ENCODE measurements at regions of chr2 and their contacts with region 1.

Region 1: GRCh38 chr2:105789745-105790460 is 45.2 kb downstream of the NCK2 start:
- DNase-seq: peak; percentile 56 to 92 (median 61)
- H3K4me3 ChIP-seq: peak overlapping the region in 1 of 2 donors; percentile 25
- H3K4me3 Mint-ChIP-seq: peak overlapping the region; percentile 78 to 92 (median 84)
- H3K27ac ChIP-seq: peak overlapping the region; percentile 79
- H3K27ac Mint-ChIP-seq: peak overlapping the region; percentile 92 to 98 (median 96)
- H3K4me1 ChIP-seq: peaks cover 98% of the 10 kb centered on the region
- H3K4me1 Mint-ChIP-seq: peaks cover 80 to 98% (median 87%) of the 10 kb centered on the region in 4 donors
- H3K27me3 ChIP-seq: no peaks in the 10 kb centered on the region
- H3K27me3 Mint-ChIP-seq: no peaks in the 10 kb centered on the region

Region 2: DNA sequence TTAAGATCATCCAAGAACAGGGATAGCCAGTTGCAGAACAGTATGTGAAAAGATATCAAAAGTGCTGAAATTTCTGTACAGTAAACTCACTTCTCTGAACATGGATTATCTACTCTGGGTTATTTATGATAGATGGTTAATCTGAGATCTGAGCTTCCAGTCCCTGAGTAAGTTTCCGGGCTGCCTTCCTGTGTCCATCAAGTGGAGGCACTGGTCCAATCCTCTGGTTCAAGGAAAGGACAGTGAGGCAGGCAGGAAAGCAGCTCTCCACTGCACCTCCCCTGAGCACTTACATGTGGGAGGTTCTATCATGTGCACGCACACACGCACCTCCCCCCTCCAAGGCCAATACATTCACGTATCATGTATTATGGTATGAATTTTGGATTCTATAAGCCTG is 515.9 kb before region 1 on chr2:
- CTCF ChIA-PET with region 1: no interaction called
- POLR2A ChIA-PET with region 1: no interaction called
- intact Hi-C with region 1: no loop called
- DNase-seq: no peak
- H3K4me3 ChIP-seq: no peak overlapping the region
- H3K4me3 Mint-ChIP-seq: no peak overlapping the region
- H3K27ac ChIP-seq: no peak overlapping the region
- H3K27ac Mint-ChIP-seq: peak overlapping the region in 1 of 7 donors; percentile 50
- H3K4me1 ChIP-seq: no peaks in the 10 kb centered on the region
- H3K4me1 Mint-ChIP-seq: no peaks in the 10 kb centered on the region
- H3K27me3 ChIP-seq: no peaks in the 10 kb centered on the region
- H3K27me3 Mint-ChIP-seq: no peaks in the 10 kb centered on the region

Region 3: DNA sequence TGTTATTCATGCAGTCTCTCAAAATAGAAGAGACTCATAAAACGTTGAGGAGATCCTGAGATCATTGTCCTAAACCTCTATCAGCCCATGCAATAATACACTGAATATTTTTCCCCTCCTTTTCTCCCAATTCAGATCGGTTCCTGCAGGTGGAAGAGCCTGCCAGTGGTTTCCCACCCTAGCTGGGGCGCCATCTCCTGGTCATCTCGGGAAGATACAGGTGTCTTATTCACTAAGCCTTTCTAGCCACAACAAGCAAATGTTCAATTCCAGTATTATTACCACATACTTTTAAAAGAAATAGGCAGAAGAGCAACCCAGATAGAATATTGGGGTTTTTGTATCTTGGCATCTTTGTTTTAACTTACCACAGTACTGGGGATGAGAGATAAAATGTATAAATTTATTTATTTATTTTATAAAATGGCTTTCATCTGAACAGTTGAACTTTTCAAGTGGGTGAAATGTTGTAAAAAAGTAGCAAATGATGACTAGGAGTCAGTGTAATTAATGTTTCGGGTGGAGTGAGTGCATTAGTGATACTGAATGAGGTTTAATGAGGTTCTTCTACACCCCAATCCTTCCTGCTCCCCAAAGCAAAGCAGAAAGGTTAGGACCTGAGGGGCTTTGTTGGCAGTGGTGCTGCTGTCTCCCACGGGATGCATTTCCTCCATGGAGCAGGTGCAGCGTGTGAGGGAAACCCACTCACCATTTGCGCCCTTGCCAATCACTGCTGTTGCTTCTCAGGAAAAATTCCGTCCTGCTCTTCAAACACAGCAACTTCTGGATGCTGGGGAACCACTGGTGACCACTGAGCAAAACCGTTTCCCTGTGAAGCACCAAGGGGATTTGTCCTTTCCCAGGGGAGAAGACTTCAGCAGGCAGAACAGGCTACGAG is 243.9 kb before region 1 on chr2:
- CTCF ChIA-PET with region 1: interaction called, 11 read pairs
- POLR2A ChIA-PET with region 1: no interaction called
- intact Hi-C with region 1: no loop called
- DNase-seq: peak; percentile 54 to 59 (median 55)
- H3K4me3 ChIP-seq: no peak overlapping the region
- H3K4me3 Mint-ChIP-seq: peak overlapping the region; percentile 42 to 66 (median 55)
- H3K27ac ChIP-seq: peak overlapping the region; percentile 15
- H3K27ac Mint-ChIP-seq: peak overlapping the region in 3 of 7 donors; percentile 3 to 18 (median 11)
- H3K4me1 ChIP-seq: peaks cover 12% of the 10 kb centered on the region
- H3K4me1 Mint-ChIP-seq: peaks cover 9 to 15% (median 13%) of the 10 kb centered on the region in 4 donors
- H3K27me3 ChIP-seq: no peaks in the 10 kb centered on the region
- H3K27me3 Mint-ChIP-seq: peaks cover 0 to 3% of the 10 kb centered on the region in 2 donors

Region 4: DNA sequence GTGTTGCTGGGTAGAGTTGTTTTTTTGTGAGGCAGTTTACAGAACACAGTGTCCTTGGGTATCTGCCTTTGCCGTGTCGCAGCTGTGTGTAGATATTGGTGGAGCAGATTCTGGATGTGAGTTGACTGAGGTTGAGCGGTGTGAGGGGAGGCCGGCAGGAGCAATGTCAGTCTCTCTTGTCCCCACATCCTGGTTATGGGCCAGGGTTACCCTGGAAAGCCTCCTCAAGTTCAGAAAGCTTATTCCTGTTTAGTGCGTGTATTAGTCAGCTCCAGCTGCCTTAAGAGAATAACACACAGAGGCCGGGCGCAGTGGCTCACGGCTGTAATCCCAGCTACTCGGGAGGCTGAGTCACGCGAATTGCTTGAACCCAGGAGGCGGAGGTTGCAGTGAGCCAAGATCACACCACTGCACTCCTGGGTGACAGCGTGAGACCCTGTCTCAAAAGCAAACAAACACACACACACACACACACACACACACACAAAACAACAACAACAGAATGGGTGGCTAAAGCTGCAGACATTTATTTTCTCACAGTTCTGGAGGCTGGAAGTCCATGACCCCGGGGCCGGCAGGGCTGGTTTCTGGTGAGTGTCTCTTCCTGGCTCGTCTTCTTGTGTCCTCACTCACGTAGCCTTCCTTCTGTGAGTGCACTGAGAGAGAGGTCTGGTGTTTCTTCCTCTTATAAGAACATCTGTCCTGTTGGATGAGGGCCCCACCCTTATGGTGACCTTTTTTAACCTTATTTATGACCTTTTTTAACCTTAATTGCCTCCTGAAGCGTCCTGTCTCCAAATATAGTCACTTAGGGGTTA is 40.1 kb before region 1 on chr2:
- CTCF ChIA-PET with region 1: interaction called, 96 read pairs
- POLR2A ChIA-PET with region 1: interaction called, 33 read pairs
- intact Hi-C with region 1: no loop called
- DNase-seq: peak in 3 of 5 donors; percentile 32 to 63 (median 37)
- H3K4me3 ChIP-seq: peak overlapping the region; percentile 21 to 48
- H3K4me3 Mint-ChIP-seq: peak overlapping the region; percentile 88 to 99 (median 92)
- H3K27ac ChIP-seq: peak overlapping the region; percentile 78
- H3K27ac Mint-ChIP-seq: peak overlapping the region; percentile 92 to 99 (median 97)
- H3K4me1 ChIP-seq: peaks cover 81% of the 10 kb centered on the region
- H3K4me1 Mint-ChIP-seq: peaks cover 60 to 93% (median 75%) of the 10 kb centered on the region in 4 donors
- H3K27me3 ChIP-seq: no peaks in the 10 kb centered on the region
- H3K27me3 Mint-ChIP-seq: no peaks in the 10 kb centered on the region

Region 5: GRCh38 chr2:105775809-105776559 is 13.9 kb before region 1 on chr2:
- CTCF ChIA-PET with region 1: interaction called, 83 read pairs
- POLR2A ChIA-PET with region 1: interaction called, 17 read pairs
- intact Hi-C with region 1: loop called (anchors 2 kb)
- DNase-seq: peak in 3 of 5 donors; percentile 48 to 66 (median 48)
- H3K4me3 ChIP-seq: peak overlapping the region; percentile 3 to 55
- H3K4me3 Mint-ChIP-seq: peak overlapping the region; percentile 73 to 90 (median 82)
- H3K27ac ChIP-seq: peak overlapping the region; percentile 71
- H3K27ac Mint-ChIP-seq: peak overlapping the region; percentile 91 to 98 (median 97)
- H3K4me1 ChIP-seq: peaks cover 100% of the 10 kb centered on the region
- H3K4me1 Mint-ChIP-seq: peaks cover 76 to 98% (median 91%) of the 10 kb centered on the region in 4 donors
- H3K27me3 ChIP-seq: no peaks in the 10 kb centered on the region
- H3K27me3 Mint-ChIP-seq: no peaks in the 10 kb centered on the region

Region 6: DNA sequence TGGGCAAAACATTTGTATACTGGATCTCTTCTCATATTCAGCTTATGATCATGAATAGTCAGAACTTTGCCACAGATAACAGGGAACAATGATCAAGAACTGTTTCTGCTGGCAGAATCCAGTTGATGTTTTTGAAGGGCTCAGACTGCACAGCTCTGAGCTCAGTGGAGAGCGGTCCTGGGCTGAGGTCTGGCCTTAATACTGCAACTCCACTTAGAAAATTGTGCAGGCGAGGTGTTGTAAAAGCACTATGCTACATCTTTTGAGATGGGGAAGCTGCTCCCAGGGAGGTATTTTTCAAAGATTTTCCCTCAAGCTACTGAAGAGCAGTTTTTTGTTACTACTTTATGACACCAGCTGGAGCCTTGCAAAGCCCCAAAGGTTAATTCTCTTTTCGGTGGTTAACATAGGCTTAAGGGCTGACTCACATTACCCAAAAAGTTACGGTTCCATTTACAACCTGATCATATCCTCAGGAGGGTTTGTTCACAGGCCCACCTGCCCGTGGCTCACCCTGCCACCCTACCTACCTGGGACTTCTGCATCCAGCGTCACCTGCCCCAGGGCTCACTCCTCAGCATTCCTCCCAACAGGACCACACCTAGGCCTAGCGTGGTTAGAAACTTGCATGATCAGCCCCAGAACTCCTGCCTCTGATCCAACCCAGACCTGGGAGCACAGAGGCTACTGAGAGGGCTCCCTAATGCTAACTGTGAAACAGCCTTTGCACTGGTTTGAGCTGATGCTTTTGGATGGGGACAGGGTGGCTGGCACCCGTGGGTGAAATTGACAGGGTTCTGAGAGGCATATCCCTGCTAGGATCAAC is 69.2 kb after region 1 on chr2:
- CTCF ChIA-PET with region 1: interaction called, 29 read pairs
- POLR2A ChIA-PET with region 1: interaction called, 21 read pairs
- intact Hi-C with region 1: no loop called
- DNase-seq: peak in 1 of 5 donors; percentile 59
- H3K4me3 ChIP-seq: peak overlapping the region; percentile 6 to 20
- H3K4me3 Mint-ChIP-seq: peak overlapping the region in 7 of 8 donors; percentile 57 to 94 (median 81)
- H3K27ac ChIP-seq: peak overlapping the region; percentile 81
- H3K27ac Mint-ChIP-seq: peak overlapping the region; percentile 92 to 99 (median 95)
- H3K4me1 ChIP-seq: peaks cover 98% of the 10 kb centered on the region
- H3K4me1 Mint-ChIP-seq: peaks cover 76 to 94% (median 86%) of the 10 kb centered on the region in 4 donors
- H3K27me3 ChIP-seq: no peaks in the 10 kb centered on the region
- H3K27me3 Mint-ChIP-seq: no peaks in the 10 kb centered on the region

Measured in CD4-positive, alpha-beta memory T cell (primary cell).